ENCODE measurements at regions of chr9 and their contacts with region 1.

Region 1: GRCh38 chr9:28264368-28264767 is 691.1 kb upstream of the C9orf72 start:
- DNase-seq: no peak
- ATAC-seq: no peak

Region 2: GRCh38 chr9:26656003-26656870 is 1608.1 kb before region 1 on chr9:
- intact Hi-C with region 1: loop called (anchors 5 kb)
- DNase-seq: no peak
- ATAC-seq: no peak

Region 3: GRCh38 chr9:27828908-27829307 is 435.5 kb before region 1 on chr9:
- intact Hi-C with region 1: no loop called
- DNase-seq: no peak
- ATAC-seq: no peak